Activated CD8-positive, alpha-beta memory T cell treated with anti-CD3 and anti-CD28 coated beads, Interleukin-2, amount 10 ng/mL, durations not matched to agents 7 days and 5 days (primary cell): ENCODE measurements at regions of chr13 and their contacts with region 1.

Region 1: DNA sequence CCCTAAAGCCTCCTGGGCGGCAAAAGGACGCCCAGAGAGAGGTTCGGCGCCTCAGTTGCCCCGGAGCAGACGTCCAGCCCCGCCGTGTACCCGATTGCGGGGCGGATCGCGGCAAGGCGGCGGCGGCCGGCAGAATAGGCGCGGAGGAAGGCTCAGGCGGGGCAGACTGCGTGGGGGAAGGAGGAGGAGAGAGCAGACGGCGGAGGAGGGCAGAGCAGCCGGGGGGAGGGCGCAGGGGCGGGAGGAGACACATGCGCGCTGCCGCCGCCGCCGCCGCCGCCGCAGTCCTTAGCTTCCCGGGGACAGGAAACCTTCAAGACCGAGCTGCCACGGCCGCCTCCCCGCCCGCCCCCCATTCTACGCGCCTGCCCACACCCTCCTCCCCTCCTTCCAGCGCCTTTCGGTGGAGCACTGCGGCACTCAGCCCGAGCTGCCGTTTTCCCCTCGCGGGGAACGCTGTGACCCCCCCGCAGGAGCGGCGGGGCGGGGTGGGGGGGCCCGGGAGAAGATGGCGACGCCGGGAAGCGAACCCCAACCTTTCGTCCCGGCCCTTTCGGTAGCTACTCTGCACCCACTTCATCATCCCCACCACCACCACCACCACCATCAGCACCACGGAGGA is at the start of gene LRCH1:
- DNase-seq: peak; percentile 93
- ATAC-seq: peak; percentile 88
- H3K4me3 Mint-ChIP-seq: peak within 1 kb of the TSS; percentile 78
- H3K27ac Mint-ChIP-seq: peak within 1 kb of the TSS; percentile 77
- H3K4me1 Mint-ChIP-seq: peaks cover 43% of the 10 kb centered on the region
- H3K27me3 Mint-ChIP-seq: peaks cover 9% of the 10 kb centered on the region
- total RNA-seq, gene LRCH1: 19.8 to 20.9 TPM

Region 2: DNA sequence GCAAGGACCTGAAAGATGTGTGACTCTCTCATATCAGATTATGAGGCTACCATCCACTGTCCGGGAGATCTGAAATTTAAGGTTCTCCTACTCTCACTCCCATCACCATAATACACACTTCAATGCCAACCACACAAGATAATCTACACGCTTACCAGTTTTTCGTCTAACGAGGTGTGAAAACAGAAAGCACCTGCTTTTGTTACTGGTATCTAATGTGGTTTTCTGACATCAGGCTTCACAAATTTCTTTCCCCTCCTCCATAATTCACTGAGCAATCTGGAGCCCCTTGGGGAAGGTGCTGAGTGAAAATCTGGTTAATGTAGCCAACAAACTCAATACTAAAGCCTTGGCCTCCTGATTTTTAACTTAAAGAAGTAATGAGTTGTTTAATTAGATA is 10.2 kb before region 1 on chr13:
- CTCF ChIA-PET with region 1: interaction called, 22 read pairs
- DNase-seq: no peak
- ATAC-seq: no peak
- H3K4me3 Mint-ChIP-seq: no peak overlapping the region
- H3K27ac Mint-ChIP-seq: no peak overlapping the region
- H3K4me1 Mint-ChIP-seq: peaks cover 11% of the 10 kb centered on the region
- H3K27me3 Mint-ChIP-seq: peaks cover 9% of the 10 kb centered on the region

Region 3: GRCh38 chr13:46679369-46680120 is 126.5 kb after region 1 on chr13:
- CTCF ChIA-PET with region 1: interaction called, 16 read pairs
- DNase-seq: peak; percentile 74
- ATAC-seq: peak; percentile 94
- H3K4me3 Mint-ChIP-seq: no peak overlapping the region
- H3K27ac Mint-ChIP-seq: no peak overlapping the region
- H3K4me1 Mint-ChIP-seq: peaks cover 36% of the 10 kb centered on the region
- H3K27me3 Mint-ChIP-seq: no peaks in the 10 kb centered on the region

Region 4: GRCh38 chr13:46721054-46721453 is 168.1 kb after region 1 on chr13:
- CTCF ChIA-PET with region 1: interaction called, 64 read pairs
- DNase-seq: peak; percentile 52
- ATAC-seq: peak; percentile 45
- H3K4me3 Mint-ChIP-seq: no peak overlapping the region
- H3K27ac Mint-ChIP-seq: no peak overlapping the region
- H3K4me1 Mint-ChIP-seq: peaks cover 13% of the 10 kb centered on the region
- H3K27me3 Mint-ChIP-seq: no peaks in the 10 kb centered on the region

Region 5: GRCh38 chr13:46726347-46726746 is 173.3 kb after region 1 on chr13:
- CTCF ChIA-PET with region 1: interaction called, 64 read pairs
- DNase-seq: peak; percentile 76
- ATAC-seq: peak; percentile 75
- H3K4me3 Mint-ChIP-seq: no peak overlapping the region
- H3K27ac Mint-ChIP-seq: peak overlapping the region; percentile 0
- H3K4me1 Mint-ChIP-seq: peaks cover 32% of the 10 kb centered on the region
- H3K27me3 Mint-ChIP-seq: no peaks in the 10 kb centered on the region

Region 6: GRCh38 chr13:46751811-46752635 is 199.0 kb after region 1 on chr13:
- CTCF ChIA-PET with region 1: interaction called, 10 read pairs
- DNase-seq: peak; percentile 92
- ATAC-seq: peak; percentile 99
- H3K4me3 Mint-ChIP-seq: peak overlapping the region; percentile 38
- H3K27ac Mint-ChIP-seq: peak overlapping the region; percentile 89
- H3K4me1 Mint-ChIP-seq: peaks cover 40% of the 10 kb centered on the region
- H3K27me3 Mint-ChIP-seq: no peaks in the 10 kb centered on the region